Activated CD4-positive, alpha-beta memory T cell treated with anti-CD3 and anti-CD28 coated beads for 36 hours (primary cell): ENCODE measurements at regions of chr16 and their contacts with region 1.

Region 1: GRCh38 chr16:80804056-80804450 is 345 bp downstream of the CDYL2 start:
- DNase-seq: peak; percentile 75
- H3K4me3 Mint-ChIP-seq: peak overlapping the region; percentile 96
- H3K27ac Mint-ChIP-seq: peak overlapping the region; percentile 89
- H3K4me1 Mint-ChIP-seq: peaks cover 57% of the 10 kb centered on the region
- H3K27me3 Mint-ChIP-seq: peaks cover 2% of the 10 kb centered on the region

Region 2: DNA sequence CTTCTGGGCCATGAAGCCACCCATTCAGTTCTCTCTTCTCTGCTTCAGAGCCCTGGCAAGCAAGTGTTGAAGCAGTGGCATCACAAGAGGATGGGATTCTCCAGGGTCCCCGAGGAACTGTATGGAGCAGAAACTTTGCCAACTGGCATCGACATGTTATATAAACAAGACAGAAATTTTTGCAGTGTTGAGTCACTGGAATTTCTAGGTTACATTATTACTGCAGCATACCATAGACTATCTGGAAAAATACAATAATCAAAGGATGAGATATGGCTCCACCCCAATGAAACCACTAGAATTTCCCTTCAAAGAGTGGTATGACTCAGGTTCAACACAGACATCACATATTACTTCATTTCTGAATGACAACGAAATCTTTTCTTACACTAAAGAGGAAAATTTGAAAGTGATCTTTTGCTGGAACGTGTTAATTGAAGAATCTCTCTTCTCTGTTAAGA is 606.3 kb before region 1 on chr16:
- CTCF ChIA-PET with region 1: no interaction called
- POLR2A ChIA-PET with region 1: no interaction called
- intact Hi-C with region 1: loop called (anchors 2 kb)
- DNase-seq: peak; percentile 10
- H3K4me3 Mint-ChIP-seq: no peak overlapping the region
- H3K27ac Mint-ChIP-seq: peak overlapping the region; percentile 42
- H3K4me1 Mint-ChIP-seq: peaks cover 7% of the 10 kb centered on the region
- H3K27me3 Mint-ChIP-seq: peaks cover 27% of the 10 kb centered on the region

Region 3: DNA sequence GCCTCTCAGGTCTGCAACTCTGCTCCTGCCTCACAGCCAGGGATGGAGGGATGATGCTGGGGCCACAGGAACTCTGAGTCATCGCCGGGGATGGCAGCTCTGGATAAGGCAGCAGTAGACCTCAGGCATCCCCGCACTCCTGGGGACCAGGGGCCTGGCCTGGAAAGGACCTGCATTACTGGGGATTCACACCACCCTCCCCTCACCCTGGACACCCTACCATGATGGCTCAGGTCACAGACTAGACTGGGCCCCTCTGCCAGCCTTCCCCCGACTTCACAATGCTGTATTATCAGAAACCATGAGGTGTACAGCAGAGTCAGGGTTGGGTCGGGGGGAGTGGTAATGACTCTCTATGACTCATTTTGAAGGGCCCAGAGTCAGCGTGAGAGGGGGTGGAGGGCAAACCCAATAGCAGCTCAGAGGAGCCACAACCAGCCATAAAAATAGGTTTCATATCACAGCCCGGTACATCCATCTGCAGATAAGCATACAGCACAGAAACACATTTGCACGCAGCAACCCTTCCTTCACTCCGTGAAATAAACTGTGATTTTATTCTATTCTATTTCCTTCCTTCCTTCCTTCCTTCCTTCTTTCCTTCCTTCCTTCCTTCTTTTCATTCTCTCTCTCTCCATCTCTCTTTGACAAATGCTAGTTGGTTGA is 234.5 kb before region 1 on chr16:
- CTCF ChIA-PET with region 1: no interaction called
- POLR2A ChIA-PET with region 1: interaction called, 4 read pairs
- intact Hi-C with region 1: loop called (anchors 1 kb)
- DNase-seq: peak; percentile 92
- H3K4me3 Mint-ChIP-seq: peak overlapping the region; percentile 22
- H3K27ac Mint-ChIP-seq: peak overlapping the region; percentile 85
- H3K4me1 Mint-ChIP-seq: peaks cover 36% of the 10 kb centered on the region
- H3K27me3 Mint-ChIP-seq: no peaks in the 10 kb centered on the region

Region 4: DNA sequence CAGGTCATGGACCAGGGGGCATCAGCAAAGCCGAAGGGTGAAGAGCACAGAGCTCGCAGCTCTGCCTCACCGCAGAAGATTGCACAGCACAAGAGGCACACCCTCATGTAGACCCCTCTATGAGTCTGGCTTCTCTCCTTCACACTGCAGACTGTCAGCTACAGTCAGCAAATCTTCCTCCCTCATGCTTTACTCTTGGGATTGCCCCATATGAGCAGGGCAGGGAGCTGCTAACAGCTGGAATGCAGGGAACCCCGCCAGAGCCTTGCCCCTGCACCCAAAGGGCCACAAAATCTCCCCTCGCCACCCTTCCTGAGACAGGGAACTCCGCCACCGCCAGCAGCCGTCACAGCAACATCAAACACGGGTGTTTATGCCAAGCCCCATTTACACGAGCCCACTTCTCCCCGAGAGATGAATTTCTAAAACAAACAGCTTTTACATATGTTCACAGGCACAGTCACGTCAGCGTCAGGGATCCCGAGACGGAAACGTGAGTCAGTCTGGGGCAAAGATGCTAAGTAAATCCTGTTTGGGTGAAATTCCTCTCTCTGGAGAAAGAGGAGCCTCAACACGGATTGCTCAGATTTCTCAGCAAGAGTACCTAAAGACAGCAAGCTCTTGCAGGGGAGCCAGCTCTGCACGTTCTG is 121.5 kb before region 1 on chr16:
- CTCF ChIA-PET with region 1: no interaction called
- POLR2A ChIA-PET with region 1: no interaction called
- intact Hi-C with region 1: loop called (anchors 1 kb)
- DNase-seq: no peak
- H3K4me3 Mint-ChIP-seq: no peak overlapping the region
- H3K27ac Mint-ChIP-seq: no peak overlapping the region
- H3K4me1 Mint-ChIP-seq: peaks cover 23% of the 10 kb centered on the region
- H3K27me3 Mint-ChIP-seq: no peaks in the 10 kb centered on the region

Region 5: DNA sequence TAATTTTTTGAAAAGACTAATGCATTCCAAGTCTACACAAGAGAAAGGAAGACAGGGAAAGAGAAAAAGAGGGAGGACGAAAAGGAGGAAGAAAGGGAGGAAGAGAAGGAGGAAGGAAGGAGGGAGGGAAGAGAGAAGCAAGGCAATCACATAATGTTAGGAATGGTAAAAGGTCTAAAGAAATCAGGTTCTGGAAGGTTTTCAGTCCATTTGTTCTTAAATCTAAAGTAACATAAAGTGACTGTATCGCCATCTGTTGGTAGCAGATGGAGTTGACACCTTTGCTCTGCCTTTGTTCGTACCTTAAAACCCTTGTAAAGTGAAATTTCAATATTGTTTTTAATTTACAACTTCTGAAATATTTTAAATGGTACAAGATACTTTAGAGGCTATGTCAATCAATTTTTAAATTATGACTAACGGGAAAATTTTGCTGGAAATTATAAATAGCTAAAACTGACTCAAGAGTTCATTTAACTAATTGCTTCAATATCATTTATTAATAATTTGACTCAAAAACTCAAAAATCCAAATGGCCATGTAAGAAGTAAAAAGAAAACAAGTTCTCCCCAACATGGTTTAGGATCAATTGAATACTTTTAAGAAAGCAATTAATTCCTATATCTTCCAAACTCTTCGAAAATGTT is 20.8 kb after region 1 on chr16:
- CTCF ChIA-PET with region 1: interaction called, 15 read pairs
- POLR2A ChIA-PET with region 1: no interaction called
- intact Hi-C with region 1: no loop called
- DNase-seq: peak; percentile 54
- H3K4me3 Mint-ChIP-seq: no peak overlapping the region
- H3K27ac Mint-ChIP-seq: no peak overlapping the region
- H3K4me1 Mint-ChIP-seq: no peaks in the 10 kb centered on the region
- H3K27me3 Mint-ChIP-seq: peaks cover 1% of the 10 kb centered on the region

Region 6: DNA sequence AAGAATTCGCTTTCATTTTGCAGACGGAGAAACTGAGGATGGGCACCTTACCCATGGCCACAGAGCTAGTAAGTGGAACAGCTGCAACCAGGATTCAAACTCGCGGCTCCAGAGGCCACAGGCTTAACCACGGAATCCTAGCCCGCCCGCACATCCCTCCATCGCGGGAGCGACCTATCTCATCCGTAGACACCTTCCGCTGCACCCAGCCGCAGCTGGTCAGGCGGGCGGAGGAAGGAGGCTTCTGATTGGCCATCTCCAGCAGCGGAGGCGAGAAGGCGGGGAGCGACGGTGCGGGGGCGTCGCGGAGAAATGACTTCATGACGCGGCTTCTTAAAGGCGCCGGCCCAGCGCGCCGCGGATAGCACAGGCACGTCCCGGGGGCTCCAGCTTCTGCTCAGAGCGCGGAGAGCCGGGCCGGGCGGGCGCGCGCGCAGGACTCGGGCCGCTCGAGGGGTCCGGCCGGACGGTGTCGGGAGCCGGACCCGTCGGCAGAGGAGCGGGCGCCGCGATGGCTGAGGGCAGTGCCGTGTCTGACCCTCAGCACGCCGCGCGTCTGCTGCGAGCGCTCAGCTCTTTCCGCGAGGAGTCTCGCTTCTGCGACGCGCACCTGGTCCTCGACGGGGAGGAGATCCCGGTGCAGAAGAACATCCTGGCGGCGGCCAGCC is 510.7 kb after region 1 on chr16 and contains the start of gene GAN:
- CTCF ChIA-PET with region 1: no interaction called
- POLR2A ChIA-PET with region 1: no interaction called
- intact Hi-C with region 1: loop called (anchors 10 kb)
- DNase-seq: peak; percentile 98
- H3K4me3 Mint-ChIP-seq: peak within 1 kb of the TSS; percentile 84
- H3K27ac Mint-ChIP-seq: peak within 1 kb of the TSS; percentile 71
- H3K4me1 Mint-ChIP-seq: peaks cover 61% of the 10 kb centered on the region
- H3K27me3 Mint-ChIP-seq: no peaks in the 10 kb centered on the region
- total RNA-seq, gene GAN: 13.6 to 14.5 TPM